CD8-positive, alpha-beta memory T cell (primary cell): ENCODE measurements at regions of chr2 and their contacts with region 1.

Region 1: DNA sequence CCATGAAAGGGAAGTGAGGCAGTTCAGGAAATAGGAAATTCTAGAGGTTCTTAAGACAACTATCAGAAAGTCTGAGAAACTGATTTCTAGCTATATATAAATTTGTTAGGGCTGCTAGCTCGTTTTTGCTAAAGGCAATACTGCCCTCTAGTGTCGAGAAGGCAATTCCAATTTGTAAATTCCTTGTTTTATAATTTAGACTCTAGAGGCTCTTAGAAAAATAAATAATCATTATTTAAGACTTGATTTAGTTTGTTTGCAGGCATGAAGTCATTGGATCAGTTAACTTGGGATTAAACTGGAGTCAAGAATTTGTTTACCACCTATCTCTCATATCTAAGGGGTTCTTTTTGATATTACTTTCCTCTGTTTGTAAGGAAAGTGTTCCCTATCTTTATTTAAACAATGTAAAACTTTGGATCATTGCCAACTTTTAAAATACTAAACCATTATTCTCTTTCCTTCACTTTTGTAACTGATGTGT is 66.2 kb downstream of the ACVR2A start:
- DNase-seq: peak in 3 of 5 donors; percentile 36 to 44 (median 37)
- H3K4me3 ChIP-seq: no peak overlapping the region
- H3K4me3 Mint-ChIP-seq: no peak overlapping the region
- H3K27ac ChIP-seq: no peak overlapping the region
- H3K27ac Mint-ChIP-seq: no peak overlapping the region
- H3K4me1 ChIP-seq: no peaks in the 10 kb centered on the region
- H3K4me1 Mint-ChIP-seq: peaks cover 0 to 10% (median 0%) of the 10 kb centered on the region in 3 donors
- H3K27me3 ChIP-seq: no peaks in the 10 kb centered on the region
- H3K27me3 Mint-ChIP-seq: peaks cover 4 to 7% of the 10 kb centered on the region in 2 donors

Region 2: GRCh38 chr2:147082850-147083522 is 828.0 kb before region 1 on chr2:
- CTCF ChIA-PET with region 1: interaction called, 11 read pairs
- POLR2A ChIA-PET with region 1: no interaction called
- DNase-seq: peak in 4 of 5 donors; percentile 1 to 21 (median 6)
- H3K4me3 ChIP-seq: no peak overlapping the region
- H3K4me3 Mint-ChIP-seq: no peak overlapping the region
- H3K27ac ChIP-seq: no peak overlapping the region
- H3K27ac Mint-ChIP-seq: no peak overlapping the region
- H3K4me1 ChIP-seq: no peaks in the 10 kb centered on the region
- H3K4me1 Mint-ChIP-seq: peaks cover 0 to 4% (median 0%) of the 10 kb centered on the region in 3 donors
- H3K27me3 ChIP-seq: no peaks in the 10 kb centered on the region
- H3K27me3 Mint-ChIP-seq: peaks cover 0 to 1% of the 10 kb centered on the region in 2 donors